ENCODE measurements at regions of chr3 and their contacts with region 1.

Region 1: GRCh38 chr3:56219894-56220805 is 248.1 kb downstream of the ERC2 start:
- DNase-seq: no peak
- ATAC-seq: peak; percentile 34; the same call in 1 of the 2 replicates
- H3K4me3 ChIP-seq: no peak overlapping the region
- H3K27ac ChIP-seq: no peak overlapping the region
- H3K4me1 ChIP-seq: no peaks in the 10 kb centered on the region
- H3K27me3 ChIP-seq: no peaks in the 10 kb centered on the region
- CTCF ChIP-seq: no peak

Region 2: GRCh38 chr3:55842204-55842603 is 377.9 kb before region 1 on chr3:
- CTCF ChIA-PET with region 1: no interaction called
- POLR2A ChIA-PET with region 1: interaction called, 11 read pairs
- in situ Hi-C with region 1: no loop called
- intact Hi-C with region 1: no loop called
- DNase-seq: no peak
- ATAC-seq: no peak
- H3K4me3 ChIP-seq: no peak overlapping the region
- H3K27ac ChIP-seq: no peak overlapping the region
- H3K4me1 ChIP-seq: no peaks in the 10 kb centered on the region
- H3K27me3 ChIP-seq: no peaks in the 10 kb centered on the region
- CTCF ChIP-seq: no peak

Region 3: GRCh38 chr3:55968331-55968730 is 251.8 kb before region 1 on chr3:
- CTCF ChIA-PET with region 1: no interaction called
- POLR2A ChIA-PET with region 1: no interaction called
- in situ Hi-C with region 1: no loop called
- intact Hi-C with region 1: no loop called
- DNase-seq: no peak
- ATAC-seq: no peak
- H3K4me3 ChIP-seq: no peak overlapping the region
- H3K27ac ChIP-seq: no peak overlapping the region
- H3K4me1 ChIP-seq: no peaks in the 10 kb centered on the region
- H3K27me3 ChIP-seq: no peaks in the 10 kb centered on the region
- CTCF ChIP-seq: no peak